ENCODE measurements at regions of chr11 and their contacts with region 1.

Region 1: DNA sequence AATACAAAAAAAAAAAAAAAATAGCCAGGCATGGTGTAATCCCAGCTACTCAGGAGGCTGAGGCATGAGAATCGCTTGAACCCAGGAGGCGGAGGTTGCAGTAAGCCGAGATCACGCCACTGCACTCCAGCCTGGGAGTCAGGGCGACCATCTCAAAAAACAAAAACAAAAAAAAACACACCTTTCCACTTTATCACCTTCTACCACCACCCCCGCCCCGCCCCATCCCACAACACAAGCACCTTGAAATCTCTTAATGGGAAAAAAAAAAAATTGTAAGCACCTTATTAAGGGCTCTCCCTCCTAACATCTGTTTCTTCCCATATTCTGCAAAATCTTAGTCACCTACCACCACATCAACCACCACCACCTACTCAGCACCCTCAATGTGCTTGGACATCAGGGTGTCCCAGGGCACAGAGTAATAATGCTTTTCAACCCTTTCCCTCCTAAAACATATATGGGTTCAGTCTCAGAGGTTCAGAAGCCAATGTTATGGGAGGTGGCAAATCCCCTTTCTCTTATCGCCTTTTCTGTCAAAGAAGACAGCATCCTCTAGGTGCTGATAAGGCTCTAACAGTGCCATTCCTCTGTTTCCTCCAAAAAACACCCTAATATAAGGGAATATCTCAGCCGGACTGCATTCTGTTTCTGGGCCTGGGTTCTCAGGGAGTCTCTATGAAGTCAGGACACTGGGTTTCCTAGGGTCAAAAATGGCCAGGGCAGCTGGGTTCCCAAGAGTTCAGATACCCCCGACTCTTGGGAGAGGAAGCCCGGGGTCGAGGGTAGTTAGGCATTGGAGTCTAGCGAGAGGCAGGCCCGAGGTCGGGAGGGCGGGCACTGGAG is 718 bp downstream of the INTS5 start:
- DNase-seq: peak in 3 of 9 experiments; percentile 26 to 50 (median 46)
- ATAC-seq: peak; percentile 10
- H3K4me3 ChIP-seq: peak overlapping the region; percentile 84 to 90
- H3K4me3 Mint-ChIP-seq: peak overlapping the region; percentile 91
- H3K27ac ChIP-seq: peak overlapping the region; percentile 81 to 91
- H3K27ac Mint-ChIP-seq: peak overlapping the region; percentile 94
- H3K4me1 ChIP-seq: peaks cover 14% of the 10 kb centered on the region
- H3K4me1 Mint-ChIP-seq: peaks cover 18% of the 10 kb centered on the region
- H3K27me3 ChIP-seq: no peaks in the 10 kb centered on the region
- H3K27me3 Mint-ChIP-seq: no peaks in the 10 kb centered on the region
- CTCF ChIP-seq: no peak

Region 2: GRCh38 chr11:61718621-61719302 is 933.6 kb before region 1 on chr11:
- CTCF ChIA-PET with region 1: no interaction called
- POLR2A ChIA-PET with region 1: no interaction called
- intact Hi-C with region 1: no loop called
- DNase-seq: no peak
- ATAC-seq: no peak
- H3K4me3 ChIP-seq: no peak overlapping the region
- H3K4me3 Mint-ChIP-seq: no peak overlapping the region
- H3K27ac ChIP-seq: no peak overlapping the region
- H3K27ac Mint-ChIP-seq: no peak overlapping the region
- H3K4me1 ChIP-seq: no peaks in the 10 kb centered on the region
- H3K4me1 Mint-ChIP-seq: no peaks in the 10 kb centered on the region
- H3K27me3 ChIP-seq: no peaks in the 10 kb centered on the region
- H3K27me3 Mint-ChIP-seq: no peaks in the 10 kb centered on the region
- CTCF ChIP-seq: no peak

Region 3: GRCh38 chr11:62612366-62613290 is 39.8 kb before region 1 on chr11 and contains the starts of genes EML3 and ROM1:
- CTCF ChIA-PET with region 1: interaction called, 9 read pairs
- POLR2A ChIA-PET with region 1: interaction called, 4 read pairs
- intact Hi-C with region 1: loop called (anchors 1 to 2 kb)
- DNase-seq: peak; percentile 79 to 95 (median 88)
- ATAC-seq: peak; percentile 72
- H3K4me3 ChIP-seq: peak within 1 kb of the TSS; percentile 67 to 97
- H3K4me3 Mint-ChIP-seq: peak within 1 kb of the TSS; percentile 95
- H3K27ac ChIP-seq: peak within 1 kb of the TSS; percentile 91
- H3K27ac Mint-ChIP-seq: peak within 1 kb of the TSS; percentile 99
- H3K4me1 ChIP-seq: peaks cover 38% of the 10 kb centered on the region
- H3K4me1 Mint-ChIP-seq: peaks cover 54% of the 10 kb centered on the region
- H3K27me3 ChIP-seq: no peaks in the 10 kb centered on the region
- H3K27me3 Mint-ChIP-seq: no peaks in the 10 kb centered on the region
- CTCF ChIP-seq: peak; percentile 99
- total RNA-seq, gene EML3: 167 to 189 TPM
- total RNA-seq, gene ROM1: 1.7 to 2.1 TPM

Region 4: DNA sequence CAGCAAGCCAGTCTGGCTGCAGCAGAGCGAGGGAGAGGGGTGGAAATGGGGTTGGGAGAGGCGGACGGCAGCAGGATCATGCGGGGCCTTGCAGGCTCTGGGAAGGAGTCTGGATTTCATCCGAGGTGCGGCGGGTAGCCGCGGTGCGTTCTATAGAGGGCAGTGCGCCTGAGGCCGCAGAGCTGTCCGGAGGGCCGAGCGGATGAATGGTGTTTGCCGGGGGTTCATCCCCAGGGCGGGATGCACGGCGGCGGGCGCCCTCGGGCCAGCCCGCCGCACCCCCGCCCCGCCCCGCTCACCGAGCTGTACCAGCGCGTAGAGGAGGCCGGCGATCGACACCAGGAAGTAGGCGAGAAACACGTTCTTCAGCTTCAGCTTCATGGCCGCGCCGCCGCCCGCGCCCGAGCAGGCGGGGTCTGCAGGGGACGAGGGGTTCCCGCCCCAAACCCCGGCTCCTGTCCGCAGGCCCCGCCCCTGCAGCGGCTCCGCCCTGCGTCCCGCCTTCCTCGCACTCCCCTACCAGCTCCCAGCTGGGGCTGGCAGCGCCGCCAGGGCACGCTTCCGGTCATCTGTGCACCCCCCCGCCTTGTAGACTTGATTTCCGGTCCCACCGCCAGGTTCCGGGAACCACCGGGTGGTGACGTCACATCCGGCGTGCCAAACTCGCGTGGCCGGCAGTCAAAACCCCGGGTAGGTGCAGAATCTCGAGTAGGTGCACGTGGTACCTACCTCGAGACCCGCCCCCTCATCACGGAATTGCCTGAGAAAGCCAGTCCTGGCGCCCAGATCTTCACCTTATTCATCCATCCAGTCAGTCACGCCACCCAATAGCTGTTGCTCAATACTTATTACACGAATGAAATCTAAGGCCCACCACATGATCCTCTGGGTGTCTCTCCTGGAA is 30.6 kb before region 1 on chr11 and contains the start of gene B3GAT3:
- CTCF ChIA-PET with region 1: interaction called, 5 read pairs
- POLR2A ChIA-PET with region 1: interaction called, 28 read pairs
- intact Hi-C with region 1: loop called (anchors 1 kb)
- DNase-seq: peak; percentile 90 to 99 (median 97)
- ATAC-seq: peak; percentile 81
- H3K4me3 ChIP-seq: peak within 1 kb of the TSS; percentile 69 to 80
- H3K4me3 Mint-ChIP-seq: peak within 1 kb of the TSS; percentile 98
- H3K27ac ChIP-seq: peak within 1 kb of the TSS; percentile 78 to 88
- H3K27ac Mint-ChIP-seq: peak within 1 kb of the TSS; percentile 97
- H3K4me1 ChIP-seq: peaks cover 20% of the 10 kb centered on the region
- H3K4me1 Mint-ChIP-seq: peaks cover 30% of the 10 kb centered on the region
- H3K27me3 ChIP-seq: no peaks in the 10 kb centered on the region
- H3K27me3 Mint-ChIP-seq: no peaks in the 10 kb centered on the region
- CTCF ChIP-seq: no peak
- total RNA-seq, gene B3GAT3: 41.7 to 44.0 TPM

Region 5: DNA sequence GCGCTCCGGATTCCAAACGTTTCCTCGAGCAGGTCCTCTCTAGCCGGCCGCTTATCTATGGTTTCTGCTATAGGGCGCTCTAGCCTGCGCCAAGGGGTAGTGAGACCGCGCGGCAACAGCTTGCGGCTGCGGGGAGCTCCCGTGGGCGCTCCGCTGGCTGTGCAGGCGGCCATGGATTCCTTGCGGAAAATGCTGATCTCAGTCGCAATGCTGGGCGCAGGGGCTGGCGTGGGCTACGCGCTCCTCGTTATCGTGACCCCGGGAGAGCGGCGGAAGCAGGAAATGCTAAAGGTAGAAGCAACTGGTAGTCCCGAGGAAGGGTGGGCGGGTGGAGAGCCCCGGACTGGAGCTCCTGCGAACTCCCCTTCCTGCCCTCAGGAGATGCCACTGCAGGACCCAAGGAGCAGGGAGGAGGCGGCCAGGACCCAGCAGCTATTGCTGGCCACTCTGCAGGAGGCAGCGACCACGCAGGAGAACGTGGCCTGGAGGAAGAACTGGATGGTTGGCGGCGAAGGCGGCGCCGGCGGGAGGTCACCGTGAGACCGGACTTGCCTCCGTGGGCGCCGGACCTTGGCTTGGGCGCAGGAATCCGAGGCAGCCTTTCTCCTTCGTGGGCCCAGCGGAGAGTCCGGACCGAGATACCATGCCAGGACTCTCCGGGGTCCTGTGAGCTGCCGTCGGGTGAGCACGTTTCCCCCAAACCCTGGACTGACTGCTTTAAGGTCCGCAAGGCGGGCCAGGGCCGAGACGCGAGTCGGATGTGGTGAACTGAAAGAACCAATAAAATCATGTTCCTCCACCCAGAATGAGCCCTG is 19.4 kb after region 1 on chr11 and contains the starts of genes LBHD1 and UQCC3:
- CTCF ChIA-PET with region 1: interaction called, 5 read pairs
- POLR2A ChIA-PET with region 1: interaction called, 34 read pairs
- intact Hi-C with region 1: loop called (anchors 2 kb)
- DNase-seq: peak; percentile 41 to 87 (median 70)
- ATAC-seq: peak; percentile 63
- H3K4me3 ChIP-seq: peak within 1 kb of the TSS; percentile 93 to 99
- H3K4me3 Mint-ChIP-seq: peak within 1 kb of the TSS; percentile 99
- H3K27ac ChIP-seq: peak within 1 kb of the TSS; percentile 77 to 78
- H3K27ac Mint-ChIP-seq: peak within 1 kb of the TSS; percentile 92
- H3K4me1 ChIP-seq: peaks cover 36% of the 10 kb centered on the region
- H3K4me1 Mint-ChIP-seq: peaks cover 62% of the 10 kb centered on the region
- H3K27me3 ChIP-seq: no peaks in the 10 kb centered on the region
- H3K27me3 Mint-ChIP-seq: no peaks in the 10 kb centered on the region
- CTCF ChIP-seq: no peak
- total RNA-seq, gene LBHD1: 14.5 to 14.6 TPM
- total RNA-seq, gene UQCC3: 1.1 to 1.7 TPM

Region 6: DNA sequence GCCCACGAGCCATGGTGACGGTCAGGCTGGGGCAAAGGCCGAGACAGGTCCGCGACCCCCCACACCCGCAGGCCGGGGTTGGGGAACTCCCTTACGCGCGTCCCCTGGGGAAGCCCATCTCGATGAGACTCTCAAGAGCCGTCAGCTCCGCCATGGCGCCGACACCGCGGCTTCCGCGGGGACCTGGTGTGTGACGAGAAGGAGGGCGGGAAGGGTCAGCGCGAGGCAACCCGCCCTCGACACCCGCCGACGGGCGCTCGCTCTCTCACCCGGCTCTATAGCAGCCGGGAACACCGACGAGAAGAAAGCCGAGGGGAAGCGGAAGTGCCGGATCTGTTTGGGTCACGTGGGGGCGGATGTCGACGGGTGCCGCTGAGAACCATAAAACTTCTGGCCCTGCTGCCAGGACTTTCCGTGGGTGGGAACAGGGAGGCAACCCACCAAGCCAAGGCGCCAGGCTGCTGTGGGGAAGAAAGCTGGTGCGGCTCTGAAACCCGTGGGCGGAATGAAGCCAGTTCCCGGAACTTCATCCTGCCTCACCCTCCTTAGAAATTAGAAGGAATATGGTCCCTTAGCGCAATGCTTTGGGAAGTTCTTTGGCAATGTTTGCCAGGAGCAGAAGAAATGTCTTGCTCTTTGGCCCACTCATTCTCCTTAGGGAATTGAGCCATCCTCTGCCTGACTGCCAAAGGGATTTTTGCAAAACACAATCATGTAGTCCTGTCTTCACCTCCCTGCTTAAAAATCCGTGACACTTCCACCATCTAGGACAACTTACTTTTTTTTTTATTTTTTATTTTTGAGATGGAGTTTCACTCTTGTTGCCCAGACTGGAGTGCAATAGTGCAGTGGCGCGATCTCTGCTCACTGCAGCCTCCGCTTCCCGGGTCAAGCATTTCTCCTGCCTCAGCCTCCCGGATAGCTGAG is 26.6 kb after region 1 on chr11 and contains the start of gene UBXN1:
- CTCF ChIA-PET with region 1: interaction called, 5 read pairs
- POLR2A ChIA-PET with region 1: interaction called, 5 read pairs
- intact Hi-C with region 1: loop called in 1 of 2 experiments (anchors 1 kb)
- DNase-seq: peak; percentile 59 to 92 (median 85)
- ATAC-seq: peak; percentile 74
- H3K4me3 ChIP-seq: peak within 1 kb of the TSS; percentile 91 to 100
- H3K4me3 Mint-ChIP-seq: peak within 1 kb of the TSS; percentile 90
- H3K27ac ChIP-seq: peak within 1 kb of the TSS; percentile 87 to 94
- H3K27ac Mint-ChIP-seq: peak within 1 kb of the TSS; percentile 93
- H3K4me1 ChIP-seq: peaks cover 26% of the 10 kb centered on the region
- H3K4me1 Mint-ChIP-seq: peaks cover 39% of the 10 kb centered on the region
- H3K27me3 ChIP-seq: no peaks in the 10 kb centered on the region
- H3K27me3 Mint-ChIP-seq: no peaks in the 10 kb centered on the region
- CTCF ChIP-seq: no peak
- total RNA-seq, gene UBXN1: 232 to 242 TPM

Measured in CD8-positive, alpha-beta T cell (primary cell).